T-cell (primary cell): ENCODE measurements at regions of chr11 and their contacts with region 1.

Region 1: DNA sequence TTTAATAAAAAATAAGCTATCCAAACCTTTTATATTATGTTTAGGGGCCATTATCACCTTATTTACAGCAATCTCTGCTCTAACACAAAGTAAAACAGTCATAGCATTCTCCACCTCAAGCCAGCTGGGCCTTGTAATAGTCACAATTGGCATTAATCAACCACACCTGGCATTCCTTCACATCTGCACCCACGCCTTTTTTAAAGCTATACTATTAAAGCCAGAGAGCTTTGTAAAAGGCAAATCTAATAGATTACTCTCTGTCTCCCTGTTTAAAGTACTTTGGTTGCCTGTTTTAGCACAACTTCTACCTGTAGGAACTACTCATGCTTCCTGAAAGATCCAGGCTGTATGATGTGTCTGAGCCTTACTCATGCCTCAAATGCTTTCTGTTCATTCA is 113.1 kb downstream of the CSNK2A3 start:
- DNase-seq: no peak
- ATAC-seq: no peak
- H3K4me3 ChIP-seq: no peak overlapping the region
- H3K4me3 Mint-ChIP-seq: no peak overlapping the region
- H3K27ac ChIP-seq: no peak overlapping the region
- H3K27ac Mint-ChIP-seq: no peak overlapping the region
- H3K4me1 ChIP-seq: peaks cover 14 to 16% of the 10 kb centered on the region in 2 experiments
- H3K4me1 Mint-ChIP-seq: peaks cover 25 to 33% (median 25%) of the 10 kb centered on the region in 3 donors
- H3K27me3 ChIP-seq: no peaks in the 10 kb centered on the region
- H3K27me3 Mint-ChIP-seq: peaks cover 0 to 4% of the 10 kb centered on the region in 2 donors

Region 2: DNA sequence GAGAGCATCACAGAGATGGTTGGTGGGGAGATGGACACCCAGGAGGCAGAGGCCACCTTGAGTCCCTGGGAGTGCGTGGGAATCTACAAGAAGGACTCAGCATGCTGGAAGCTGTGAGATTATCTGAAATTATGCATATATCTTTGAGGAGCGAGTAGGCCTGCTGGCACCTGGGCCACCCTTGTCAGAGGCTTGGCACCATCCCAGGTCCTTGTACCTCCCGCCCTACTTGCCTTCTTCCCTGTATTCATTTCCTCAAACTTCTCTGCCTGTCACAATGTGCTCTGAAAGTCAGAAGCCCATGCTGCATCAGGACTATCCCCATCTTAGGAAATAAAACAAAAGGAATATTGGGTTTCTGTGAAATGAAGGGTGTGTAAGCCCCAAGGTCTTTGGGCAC is 246.0 kb after region 1 on chr11:
- CTCF ChIA-PET with region 1: no interaction called
- POLR2A ChIA-PET with region 1: interaction called in 1 of 2 experiments, 12 read pairs
- DNase-seq: no peak
- ATAC-seq: no peak
- H3K4me3 ChIP-seq: no peak overlapping the region
- H3K4me3 Mint-ChIP-seq: no peak overlapping the region
- H3K27ac ChIP-seq: no peak overlapping the region
- H3K27ac Mint-ChIP-seq: no peak overlapping the region
- H3K4me1 ChIP-seq: no peaks in the 10 kb centered on the region
- H3K4me1 Mint-ChIP-seq: no peaks in the 10 kb centered on the region
- H3K27me3 ChIP-seq: peaks cover 0 to 10% of the 10 kb centered on the region in 2 experiments
- H3K27me3 Mint-ChIP-seq: peaks cover 3 to 8% of the 10 kb centered on the region in 2 donors